Psoas muscle (tissue), 8 donors: ENCODE measurements at regions of chr11 and their contacts with region 1.

Region 1: GRCh38 chr11:123020968-123021367 is 39.3 kb upstream of the BSX start:
- DNase-seq: no peak
- ATAC-seq: no peak
- H3K4me3 ChIP-seq: no peak overlapping the region
- H3K27ac ChIP-seq: no peak overlapping the region
- H3K4me1 ChIP-seq: no peaks in the 10 kb centered on the region
- H3K27me3 ChIP-seq: peaks cover 2 to 16% (median 3%) of the 10 kb centered on the region in 3 donors
- CTCF ChIP-seq: peak; percentile 11

Region 2: GRCh38 chr11:122863704-122864326 is 157.2 kb before region 1 on chr11:
- intact Hi-C with region 1: loop called (anchors 2 to 10 kb)
- DNase-seq: peak in 1 of 2 donors; percentile 31
- ATAC-seq: no peak
- H3K4me3 ChIP-seq: no peak overlapping the region
- H3K27ac ChIP-seq: no peak overlapping the region
- H3K4me1 ChIP-seq: no peaks in the 10 kb centered on the region
- H3K27me3 ChIP-seq: peaks cover 3 to 12% (median 5%) of the 10 kb centered on the region in 3 donors
- CTCF ChIP-seq: peak; percentile 66